AG04450 (cell line): ENCODE measurements at regions of chrX and their contacts with region 1.

Region 1: DNA sequence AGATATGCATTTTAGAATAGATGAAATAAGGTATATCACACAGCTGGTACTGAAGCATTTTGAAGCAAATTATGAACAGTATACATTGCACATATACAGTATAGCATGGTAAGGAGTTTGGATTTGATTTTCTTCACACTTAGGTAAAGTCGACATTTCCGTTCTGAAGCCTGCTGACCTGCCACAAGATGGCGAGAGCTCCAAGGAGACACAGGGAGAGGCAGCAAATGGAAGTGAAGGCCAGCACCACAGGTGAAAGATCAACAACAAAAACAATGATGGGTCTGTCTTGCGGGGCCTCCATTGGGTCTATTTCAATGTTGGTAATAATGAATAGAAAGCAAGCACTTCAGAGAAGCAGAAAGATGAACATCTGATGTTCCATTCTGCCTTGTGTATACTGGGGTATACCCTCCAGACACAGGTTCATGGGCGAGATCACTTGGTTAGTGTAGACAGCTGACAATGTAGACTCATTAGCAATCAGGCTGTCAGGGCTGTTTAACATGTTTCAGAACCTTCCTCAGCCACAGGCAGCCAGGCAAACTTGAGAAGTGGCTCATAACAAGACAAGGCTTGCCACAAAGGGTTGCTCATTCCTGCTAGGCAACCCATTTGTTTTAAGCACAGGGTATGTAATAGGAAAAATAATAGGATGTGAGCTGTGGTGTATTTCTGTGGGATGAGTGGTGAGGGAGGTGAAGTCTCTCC is 21.4 kb upstream of the NOX1 start:
- DNase-seq: no peak
- H3K4me3 ChIP-seq: no peak overlapping the region
- H3K27ac ChIP-seq: no peak overlapping the region
- H3K27me3 ChIP-seq: no peaks in the 10 kb centered on the region
- CTCF ChIP-seq: peak; percentile 66

Region 2: DNA sequence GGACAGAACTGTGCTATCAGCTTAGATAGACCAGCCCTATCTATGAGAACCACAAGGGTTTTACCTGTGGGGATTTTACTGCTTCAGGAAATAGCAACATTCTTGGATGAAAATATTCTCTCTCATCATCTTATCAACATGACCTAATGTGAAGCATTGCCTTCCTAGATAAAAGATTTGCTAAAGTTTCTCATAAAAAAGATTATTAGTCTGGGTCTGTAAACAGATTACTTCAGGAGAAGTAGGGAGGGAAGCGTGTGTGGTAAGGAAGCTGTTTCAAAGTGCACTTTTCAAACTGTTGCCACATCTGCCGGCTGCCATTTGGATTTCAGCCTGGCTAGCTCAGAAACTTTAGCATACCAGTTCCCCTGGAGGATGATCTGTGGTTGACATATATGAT is 21.2 kb before region 1 on chrX and contains the start of gene NOX1:
- CTCF ChIA-PET with region 1: no interaction called
- POLR2A ChIA-PET with region 1: no interaction called
- DNase-seq: no peak
- H3K4me3 ChIP-seq: no peak within 1 kb of the TSS
- H3K27ac ChIP-seq: no peak within 1 kb of the TSS
- H3K27me3 ChIP-seq: no peaks in the 10 kb centered on the region
- CTCF ChIP-seq: no peak
- polyA plus RNA-seq, gene NOX1: not detected in 2 replicates

Region 3: GRCh38 chrX:101287402-101287801 is 391.9 kb after region 1 on chrX:
- CTCF ChIA-PET with region 1: interaction called, 15 read pairs
- POLR2A ChIA-PET with region 1: no interaction called
- DNase-seq: peak; percentile 11
- H3K4me3 ChIP-seq: no peak overlapping the region
- H3K27ac ChIP-seq: no peak overlapping the region
- H3K27me3 ChIP-seq: no peaks in the 10 kb centered on the region
- CTCF ChIP-seq: peak; percentile 65